Naive thymus-derived CD4-positive, alpha-beta T cell (primary cell): ENCODE measurements at regions of chr10 and their contacts with region 1.

Region 1: DNA sequence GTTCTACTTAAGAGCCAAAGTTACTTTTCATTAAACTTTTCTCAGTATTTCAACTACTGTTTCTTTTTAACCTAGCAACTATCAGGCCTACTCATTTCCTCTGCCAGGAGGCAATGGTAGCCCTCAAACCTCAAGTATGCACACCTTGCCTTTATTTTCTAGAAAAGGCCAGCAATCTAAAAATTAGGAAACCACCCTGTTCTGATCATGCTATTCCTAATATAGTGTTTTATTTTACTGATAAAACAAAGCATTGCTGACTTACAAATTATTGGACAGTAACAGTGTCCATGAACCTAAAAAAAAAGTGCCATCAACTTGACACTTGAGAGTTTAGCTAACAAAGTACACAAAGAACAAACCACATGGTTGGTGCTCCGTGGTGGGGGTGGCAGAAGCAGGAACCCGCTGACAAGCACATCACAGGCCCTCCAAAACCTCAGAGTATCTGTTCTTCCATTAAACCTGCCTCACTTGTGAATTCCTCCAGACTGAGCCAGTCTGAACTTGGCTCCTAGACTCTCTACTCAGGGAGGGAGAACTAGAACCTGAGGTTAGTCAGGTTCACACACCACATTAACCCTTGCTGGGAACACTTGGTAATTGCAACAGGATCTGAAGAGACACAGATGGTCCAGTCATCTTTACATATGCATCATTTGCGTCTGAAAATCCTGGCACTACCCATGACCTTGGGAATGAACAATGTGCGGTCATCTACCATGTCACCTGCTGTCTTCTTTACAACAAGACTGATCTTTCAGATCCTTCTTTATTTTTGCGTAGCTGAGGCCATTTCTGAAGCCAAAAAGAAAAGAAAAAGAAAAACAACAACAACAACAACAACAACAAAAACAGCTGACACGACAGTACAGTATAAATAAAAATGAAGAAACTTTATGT is 31.9 kb downstream of the PIP4K2A start:
- DNase-seq: peak in 8 of 9 donors; percentile 43 to 81 (median 75)
- ATAC-seq: peak; percentile 79
- H3K4me3 ChIP-seq: peak overlapping the region; percentile 36
- H3K4me3 Mint-ChIP-seq: peak overlapping the region; percentile 67 to 94 (median 80)
- H3K27ac ChIP-seq: peak overlapping the region; percentile 73
- H3K27ac Mint-ChIP-seq: peak overlapping the region; percentile 90 to 100 (median 95)
- H3K4me1 ChIP-seq: peaks cover 86 to 94% of the 10 kb centered on the region in 2 donors
- H3K4me1 Mint-ChIP-seq: peaks cover 64 to 99% (median 91%) of the 10 kb centered on the region in 7 donors
- H3K27me3 ChIP-seq: no peaks in the 10 kb centered on the region
- H3K27me3 Mint-ChIP-seq: no peaks in the 10 kb centered on the region

Region 2: DNA sequence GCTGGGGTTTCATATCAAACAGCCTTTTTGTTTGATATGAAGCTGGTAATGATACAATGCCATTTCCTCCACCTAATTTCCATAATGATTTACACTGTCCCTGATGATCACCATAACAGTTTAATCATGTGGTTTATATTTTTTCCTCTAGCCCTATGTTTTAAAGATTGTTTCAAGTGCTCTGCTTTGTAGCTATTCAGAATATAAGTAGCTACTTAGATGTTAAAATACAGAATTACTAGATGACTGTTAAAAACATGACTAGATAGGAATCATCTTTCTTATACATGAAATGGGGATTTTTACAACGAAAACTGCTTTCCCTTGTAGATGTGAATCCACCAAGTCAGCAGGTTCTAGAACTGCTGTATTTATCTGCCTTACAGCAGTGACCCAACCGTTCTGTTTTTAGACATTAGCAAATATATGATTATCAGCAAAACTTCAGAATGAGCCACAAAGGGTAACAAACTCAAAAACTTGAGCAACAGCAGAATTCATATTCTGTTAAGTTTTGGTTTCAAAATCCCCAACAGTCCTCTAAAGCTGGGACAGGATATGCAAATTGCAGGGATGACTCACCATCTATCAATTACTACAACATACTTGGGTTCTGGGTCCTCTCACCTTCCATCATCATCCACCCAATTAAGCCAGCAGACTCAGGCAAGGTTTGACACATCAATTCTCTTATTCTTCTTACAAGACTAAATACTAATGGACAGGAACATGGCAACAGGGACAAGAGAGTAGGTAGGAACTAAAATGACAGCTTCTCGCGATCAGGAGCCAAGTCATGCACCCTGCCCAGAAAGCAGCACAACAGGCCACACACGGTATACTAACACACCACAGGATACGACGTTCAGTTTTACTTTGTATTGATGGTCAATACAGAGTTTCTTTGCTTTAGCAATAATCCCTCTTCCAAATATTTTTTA is 52.0 kb before region 1 on chr10:
- CTCF ChIA-PET with region 1: no interaction called
- POLR2A ChIA-PET with region 1: interaction called, 6 read pairs
- intact Hi-C with region 1: loop called (anchors 1 kb)
- DNase-seq: peak in 6 of 9 donors; percentile 27 to 73 (median 38)
- ATAC-seq: peak; percentile 89
- H3K4me3 ChIP-seq: peak overlapping the region; percentile 37
- H3K4me3 Mint-ChIP-seq: peak overlapping the region; percentile 3 to 85 (median 72)
- H3K27ac ChIP-seq: peak overlapping the region; percentile 68
- H3K27ac Mint-ChIP-seq: peak overlapping the region; percentile 68 to 98 (median 90)
- H3K4me1 ChIP-seq: peaks cover 66 to 97% of the 10 kb centered on the region in 2 donors
- H3K4me1 Mint-ChIP-seq: peaks cover 65 to 100% (median 98%) of the 10 kb centered on the region in 7 donors
- H3K27me3 ChIP-seq: no peaks in the 10 kb centered on the region
- H3K27me3 Mint-ChIP-seq: no peaks in the 10 kb centered on the region

Region 3: DNA sequence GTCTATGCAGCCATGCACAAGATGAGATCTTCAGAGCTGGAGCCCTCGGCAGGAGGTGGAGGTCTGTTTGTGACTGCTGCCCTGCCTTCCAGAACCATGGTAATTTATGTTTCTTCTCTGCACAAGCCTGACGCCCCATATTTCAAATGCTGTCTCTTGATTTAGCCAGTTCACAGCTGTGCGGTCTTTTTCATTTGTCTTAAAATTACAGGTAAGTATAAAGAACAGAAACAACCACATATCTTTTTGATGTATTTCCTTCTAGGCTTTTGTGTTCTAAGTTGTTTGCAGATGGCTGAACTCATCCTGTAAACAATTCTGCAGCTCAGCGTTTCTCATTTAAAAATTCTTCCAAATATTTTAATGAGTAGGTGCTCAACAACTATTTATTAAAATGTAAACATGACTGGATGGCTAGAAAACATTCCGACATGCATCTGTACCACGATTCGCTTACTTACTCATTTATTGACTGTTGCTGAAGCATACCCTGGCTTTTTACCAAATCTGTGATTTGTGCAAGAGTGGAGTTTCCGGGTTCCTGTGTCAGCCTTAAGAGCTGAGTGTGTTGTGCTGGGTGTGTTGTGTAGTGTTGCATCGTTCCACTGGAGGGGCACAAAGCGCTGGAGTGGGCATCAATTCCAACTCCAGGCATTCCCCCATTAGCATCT is 27.0 kb before region 1 on chr10:
- CTCF ChIA-PET with region 1: interaction called, 7 read pairs
- POLR2A ChIA-PET with region 1: interaction called, 8 read pairs
- intact Hi-C with region 1: loop called (anchors 1 kb)
- DNase-seq: peak in 7 of 9 donors; percentile 69 to 90 (median 86)
- ATAC-seq: peak; percentile 89
- H3K4me3 ChIP-seq: peak overlapping the region; percentile 23
- H3K4me3 Mint-ChIP-seq: peak overlapping the region; percentile 67 to 87 (median 81)
- H3K27ac ChIP-seq: peak overlapping the region; percentile 54
- H3K27ac Mint-ChIP-seq: peak overlapping the region; percentile 82 to 97 (median 92)
- H3K4me1 ChIP-seq: peaks cover 84 to 88% of the 10 kb centered on the region in 2 donors
- H3K4me1 Mint-ChIP-seq: peaks cover 84 to 100% (median 90%) of the 10 kb centered on the region in 7 donors
- H3K27me3 ChIP-seq: no peaks in the 10 kb centered on the region
- H3K27me3 Mint-ChIP-seq: no peaks in the 10 kb centered on the region

Region 4: DNA sequence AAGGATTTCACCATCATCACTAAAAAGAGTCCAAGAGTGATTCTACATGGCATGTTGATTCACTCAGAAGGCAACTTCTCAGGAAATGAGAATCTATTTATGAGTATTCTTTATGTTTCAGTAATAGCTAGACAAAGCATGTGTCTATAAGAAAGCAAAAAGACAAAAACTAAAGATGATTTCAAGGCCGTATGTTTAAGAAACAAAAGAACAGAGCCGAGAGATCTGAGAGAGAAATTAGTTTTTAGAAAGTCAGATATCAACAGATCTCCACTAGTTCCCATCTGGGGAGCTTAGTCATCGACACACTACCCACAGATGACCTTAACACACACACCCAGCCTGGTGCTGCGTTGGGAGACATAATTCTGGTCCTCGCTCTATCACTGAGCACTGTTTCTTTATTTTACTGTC is 10.9 kb after region 1 on chr10:
- CTCF ChIA-PET with region 1: interaction called, 3 read pairs
- POLR2A ChIA-PET with region 1: interaction called, 9 read pairs
- intact Hi-C with region 1: loop called (anchors 1 to 2 kb)
- DNase-seq: no peak
- ATAC-seq: peak; percentile 82
- H3K4me3 ChIP-seq: no peak overlapping the region
- H3K4me3 Mint-ChIP-seq: peak overlapping the region in 8 of 10 donors; percentile 1 to 58 (median 41)
- H3K27ac ChIP-seq: no peak overlapping the region
- H3K27ac Mint-ChIP-seq: peak overlapping the region; percentile 21 to 95 (median 82)
- H3K4me1 ChIP-seq: peaks cover 54 to 86% of the 10 kb centered on the region in 2 donors
- H3K4me1 Mint-ChIP-seq: peaks cover 53 to 97% (median 94%) of the 10 kb centered on the region in 7 donors
- H3K27me3 ChIP-seq: no peaks in the 10 kb centered on the region
- H3K27me3 Mint-ChIP-seq: no peaks in the 10 kb centered on the region